Activated naive CD4-positive, alpha-beta T cell treated with anti-CD3 and anti-CD28 coated beads for 36 hours (primary cell): ENCODE measurements at regions of chr12 and their contacts with region 1.

Region 1: GRCh38 chr12:25320123-25321006 is 69.6 kb upstream of the KRAS start:
- DNase-seq: peak; percentile 51
- H3K4me3 Mint-ChIP-seq: peak overlapping the region; percentile 33
- H3K27ac Mint-ChIP-seq: peak overlapping the region; percentile 87
- H3K4me1 Mint-ChIP-seq: peaks cover 54% of the 10 kb centered on the region
- H3K27me3 Mint-ChIP-seq: no peaks in the 10 kb centered on the region

Region 2: GRCh38 chr12:24919346-24920001 is 400.9 kb before region 1 on chr12:
- CTCF ChIA-PET with region 1: no interaction called
- intact Hi-C with region 1: loop called (anchors 5 kb)
- DNase-seq: peak; percentile 78
- H3K4me3 Mint-ChIP-seq: no peak overlapping the region
- H3K27ac Mint-ChIP-seq: no peak overlapping the region
- H3K4me1 Mint-ChIP-seq: peaks cover 42% of the 10 kb centered on the region
- H3K27me3 Mint-ChIP-seq: peaks cover 13% of the 10 kb centered on the region

Region 3: GRCh38 chr12:24997970-24998582 is 322.3 kb before region 1 on chr12:
- CTCF ChIA-PET with region 1: no interaction called
- intact Hi-C with region 1: loop called (anchors 2 kb)
- DNase-seq: peak; percentile 20
- H3K4me3 Mint-ChIP-seq: no peak overlapping the region
- H3K27ac Mint-ChIP-seq: peak overlapping the region; percentile 75
- H3K4me1 Mint-ChIP-seq: peaks cover 36% of the 10 kb centered on the region
- H3K27me3 Mint-ChIP-seq: no peaks in the 10 kb centered on the region

Region 4: GRCh38 chr12:25195056-25195971 is 125.1 kb before region 1 on chr12 and contains the starts of genes DNAI7 and ETFRF1:
- CTCF ChIA-PET with region 1: no interaction called
- intact Hi-C with region 1: loop called (anchors 2 kb)
- DNase-seq: peak; percentile 94
- H3K4me3 Mint-ChIP-seq: peak within 1 kb of the TSS; percentile 98
- H3K27ac Mint-ChIP-seq: peak within 1 kb of the TSS; percentile 94
- H3K4me1 Mint-ChIP-seq: peaks cover 22% of the 10 kb centered on the region
- H3K27me3 Mint-ChIP-seq: no peaks in the 10 kb centered on the region
- total RNA-seq, gene DNAI7: 0.10 to 0.35 TPM
- total RNA-seq, gene ETFRF1: 11.4 to 13.1 TPM

Region 5: GRCh38 chr12:25250744-25251730 is 69.3 kb before region 1 on chr12 and contains the start of gene KRAS:
- CTCF ChIA-PET with region 1: no interaction called
- intact Hi-C with region 1: loop called (anchors 1 kb)
- DNase-seq: peak; percentile 94
- H3K4me3 Mint-ChIP-seq: peak within 1 kb of the TSS; percentile 93
- H3K27ac Mint-ChIP-seq: peak within 1 kb of the TSS; percentile 88
- H3K4me1 Mint-ChIP-seq: peaks cover 43% of the 10 kb centered on the region
- H3K27me3 Mint-ChIP-seq: no peaks in the 10 kb centered on the region
- total RNA-seq, gene KRAS: 18.9 to 20.6 TPM

Region 6: GRCh38 chr12:25295361-25295760 is 25.0 kb before region 1 on chr12:
- CTCF ChIA-PET with region 1: interaction called, 6 read pairs
- intact Hi-C with region 1: loop called (anchors 2 kb)
- DNase-seq: no peak
- H3K4me3 Mint-ChIP-seq: no peak overlapping the region
- H3K27ac Mint-ChIP-seq: no peak overlapping the region
- H3K4me1 Mint-ChIP-seq: peaks cover 13% of the 10 kb centered on the region
- H3K27me3 Mint-ChIP-seq: no peaks in the 10 kb centered on the region

Region 7: GRCh38 chr12:25377469-25378177 is 57.3 kb after region 1 on chr12:
- CTCF ChIA-PET with region 1: interaction called, 5 read pairs
- intact Hi-C with region 1: loop called (anchors 1 kb)
- DNase-seq: peak; percentile 75
- H3K4me3 Mint-ChIP-seq: peak overlapping the region; percentile 8
- H3K27ac Mint-ChIP-seq: peak overlapping the region; percentile 54
- H3K4me1 Mint-ChIP-seq: peaks cover 54% of the 10 kb centered on the region
- H3K27me3 Mint-ChIP-seq: no peaks in the 10 kb centered on the region